ENCODE measurements at regions of chr17 and their contacts with region 1.

Region 1: GRCh38 chr17:7239091-7240027 is at the start of gene PHF23:
- DNase-seq: peak; percentile 98
- ATAC-seq: peak; percentile 67
- H3K4me3 Mint-ChIP-seq: peak within 1 kb of the TSS; percentile 98
- H3K27ac Mint-ChIP-seq: peak within 1 kb of the TSS; percentile 91
- H3K4me1 Mint-ChIP-seq: peaks cover 66% of the 10 kb centered on the region
- H3K27me3 Mint-ChIP-seq: no peaks in the 10 kb centered on the region
- total RNA-seq, gene PHF23: 53.6 to 57.9 TPM

Region 2: GRCh38 chr17:7252176-7253043 is 13.1 kb after region 1 on chr17 and contains the start of gene ELP5:
- CTCF ChIA-PET with region 1: interaction called, 8 read pairs
- POLR2A ChIA-PET with region 1: interaction called, 15 read pairs
- DNase-seq: peak; percentile 94
- ATAC-seq: peak; percentile 76
- H3K4me3 Mint-ChIP-seq: peak within 1 kb of the TSS; percentile 83
- H3K27ac Mint-ChIP-seq: peak within 1 kb of the TSS; percentile 100
- H3K4me1 Mint-ChIP-seq: peaks cover 49% of the 10 kb centered on the region
- H3K27me3 Mint-ChIP-seq: no peaks in the 10 kb centered on the region
- total RNA-seq, gene ELP5: 63.5 to 66.1 TPM